ENCODE measurements at regions of chr1 and their contacts with region 1.

Region 1: DNA sequence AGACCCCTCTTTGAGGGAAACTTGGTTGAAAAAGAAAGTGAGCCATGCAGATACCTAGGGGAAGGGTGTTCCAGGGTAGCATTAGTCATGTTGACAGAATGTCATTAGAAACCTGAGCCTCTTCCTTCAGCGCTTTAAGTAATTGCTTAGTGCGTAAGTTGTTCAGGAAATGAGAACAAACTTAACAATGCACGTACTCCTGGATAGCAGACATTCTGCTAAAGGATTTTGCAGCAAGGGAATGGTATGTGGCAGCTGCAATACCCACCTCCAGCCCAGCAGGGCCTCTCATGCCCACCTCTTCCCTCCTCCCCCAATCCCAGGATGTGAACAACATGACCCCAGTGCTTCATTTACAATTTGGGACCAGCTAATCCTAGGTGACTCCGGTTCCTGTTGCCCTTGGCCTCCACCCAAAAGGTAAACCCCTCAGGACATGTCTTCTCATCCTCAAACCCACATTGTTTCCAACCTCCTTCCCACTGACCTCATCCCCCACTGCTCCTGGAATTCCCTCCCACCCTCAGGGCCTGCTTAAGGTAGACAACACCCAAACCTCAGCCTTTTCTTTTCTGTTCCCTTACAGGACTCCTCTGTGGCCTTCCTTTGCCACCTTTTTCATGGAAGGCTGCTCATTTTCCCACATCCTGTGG is 98.0 kb upstream of the BCAR3 start:
- DNase-seq: no peak
- H3K4me3 Mint-ChIP-seq: no peak overlapping the region
- H3K27ac Mint-ChIP-seq: no peak overlapping the region
- H3K4me1 Mint-ChIP-seq: no peaks in the 10 kb centered on the region
- H3K27me3 Mint-ChIP-seq: peaks cover 16% of the 10 kb centered on the region

Region 2: GRCh38 chr1:93804412-93804811 is 24.7 kb after region 1 on chr1:
- intact Hi-C with region 1: loop called (anchors 2 kb)
- DNase-seq: no peak
- H3K4me3 Mint-ChIP-seq: no peak overlapping the region
- H3K27ac Mint-ChIP-seq: no peak overlapping the region
- H3K4me1 Mint-ChIP-seq: no peaks in the 10 kb centered on the region
- H3K27me3 Mint-ChIP-seq: peaks cover 19% of the 10 kb centered on the region

Measured in activated CD4-positive, alpha-beta T cell treated with anti-CD3 and anti-CD28 coated beads, Interleukin-2, amount 10 ng/mL, durations not matched to agents 24 days and 14 days (primary cell).